ENCODE measurements at regions of chr11 and their contacts with region 1.

Region 1: GRCh38 chr11:88552377-88553062 is 215.0 kb upstream of the CTSC start:
- DNase-seq: peak; percentile 65
- H3K4me3 Mint-ChIP-seq: no peak overlapping the region
- H3K27ac Mint-ChIP-seq: no peak overlapping the region
- H3K4me1 Mint-ChIP-seq: peaks cover under 1% of the 10 kb centered on the region
- H3K27me3 Mint-ChIP-seq: no peaks in the 10 kb centered on the region
- CTCF ChIP-seq: peak; percentile 63

Region 2: DNA sequence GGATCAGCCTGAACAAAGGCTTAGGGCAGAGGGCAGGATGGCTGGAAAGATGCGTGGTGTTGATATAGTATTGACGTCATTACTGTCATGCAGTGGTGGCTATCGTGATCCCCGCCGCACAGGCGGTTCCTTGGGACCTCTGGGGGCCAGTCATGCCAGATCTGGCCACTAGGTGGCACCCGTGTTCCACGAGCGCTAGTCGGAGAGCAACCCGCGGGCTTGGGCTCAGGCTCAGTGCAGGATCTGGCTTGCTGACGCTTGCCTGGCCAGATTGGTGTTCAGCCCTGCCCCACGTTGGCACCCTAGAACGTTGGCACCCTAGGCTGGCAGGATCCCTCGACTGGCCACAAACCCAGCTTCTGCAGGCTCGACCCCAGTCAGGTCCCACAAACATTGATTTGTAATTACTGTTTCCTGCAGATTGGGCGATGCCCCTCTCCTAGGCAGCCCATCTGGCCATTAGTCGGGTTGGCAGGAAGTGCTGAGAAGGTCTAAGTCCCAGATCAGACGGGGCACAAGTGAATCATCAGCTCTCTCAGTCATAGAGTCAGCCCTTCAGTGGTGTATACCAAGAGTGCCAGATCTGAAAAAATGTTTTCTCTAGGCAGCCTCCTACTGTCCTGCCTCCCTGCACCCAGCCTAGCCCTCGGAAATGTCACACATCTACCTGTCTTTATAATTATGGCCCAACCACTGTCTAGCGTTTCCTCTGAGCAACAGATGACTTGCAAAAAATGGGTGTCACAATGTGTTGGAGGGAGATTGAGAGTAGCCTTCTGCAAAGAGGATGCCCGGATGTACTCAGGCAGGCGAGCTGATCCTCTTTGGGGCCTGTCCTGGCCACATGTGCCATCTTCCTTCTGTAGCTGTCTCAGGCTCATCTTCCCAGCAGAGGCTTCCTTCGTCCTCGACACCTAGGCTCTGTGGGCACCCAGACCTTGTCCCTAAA is 1199.5 kb before region 1 on chr11:
- CTCF ChIA-PET with region 1: no interaction called
- intact Hi-C with region 1: loop called (anchors 10 kb)
- DNase-seq: peak; percentile 85
- H3K4me3 Mint-ChIP-seq: no peak overlapping the region
- H3K27ac Mint-ChIP-seq: no peak overlapping the region
- H3K4me1 Mint-ChIP-seq: no peaks in the 10 kb centered on the region
- H3K27me3 Mint-ChIP-seq: no peaks in the 10 kb centered on the region
- CTCF ChIP-seq: peak; percentile 95

Region 3: GRCh38 chr11:87722756-87723565 is 829.6 kb before region 1 on chr11:
- CTCF ChIA-PET with region 1: no interaction called
- intact Hi-C with region 1: loop called (anchors 10 kb)
- DNase-seq: peak; percentile 48
- H3K4me3 Mint-ChIP-seq: no peak overlapping the region
- H3K27ac Mint-ChIP-seq: no peak overlapping the region
- H3K4me1 Mint-ChIP-seq: peaks cover 6% of the 10 kb centered on the region
- H3K27me3 Mint-ChIP-seq: peaks cover 12% of the 10 kb centered on the region
- CTCF ChIP-seq: peak; percentile 51

Region 4: DNA sequence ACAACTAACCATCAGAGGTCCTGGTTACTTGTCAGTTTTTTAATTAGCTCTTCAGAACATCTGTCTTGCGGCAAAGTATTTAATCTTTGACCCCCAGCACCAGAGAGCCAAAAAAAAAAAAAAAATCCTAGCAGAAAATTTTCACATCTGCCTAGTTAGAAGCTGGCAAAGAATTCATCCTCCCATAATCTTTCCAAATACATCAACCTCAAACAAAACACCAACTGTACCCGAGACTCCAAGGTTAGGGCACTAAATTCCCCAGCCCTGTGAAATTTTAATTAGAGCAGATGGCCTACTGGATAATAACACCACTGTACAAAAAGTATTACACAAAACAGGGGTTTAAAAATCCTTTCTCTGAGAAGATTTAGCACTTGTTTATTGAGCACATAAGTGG is 433.0 kb before region 1 on chr11:
- CTCF ChIA-PET with region 1: no interaction called
- intact Hi-C with region 1: no loop called
- DNase-seq: no peak
- H3K4me3 Mint-ChIP-seq: no peak overlapping the region
- H3K27ac Mint-ChIP-seq: no peak overlapping the region
- H3K4me1 Mint-ChIP-seq: peaks cover 7% of the 10 kb centered on the region
- H3K27me3 Mint-ChIP-seq: no peaks in the 10 kb centered on the region
- CTCF ChIP-seq: no peak

Region 5: GRCh38 chr11:88590361-88590760 is 37.8 kb after region 1 on chr11:
- CTCF ChIA-PET with region 1: no interaction called
- intact Hi-C with region 1: no loop called
- DNase-seq: no peak
- H3K4me3 Mint-ChIP-seq: no peak overlapping the region
- H3K27ac Mint-ChIP-seq: no peak overlapping the region
- H3K4me1 Mint-ChIP-seq: no peaks in the 10 kb centered on the region
- H3K27me3 Mint-ChIP-seq: no peaks in the 10 kb centered on the region
- CTCF ChIP-seq: no peak

Region 6: DNA sequence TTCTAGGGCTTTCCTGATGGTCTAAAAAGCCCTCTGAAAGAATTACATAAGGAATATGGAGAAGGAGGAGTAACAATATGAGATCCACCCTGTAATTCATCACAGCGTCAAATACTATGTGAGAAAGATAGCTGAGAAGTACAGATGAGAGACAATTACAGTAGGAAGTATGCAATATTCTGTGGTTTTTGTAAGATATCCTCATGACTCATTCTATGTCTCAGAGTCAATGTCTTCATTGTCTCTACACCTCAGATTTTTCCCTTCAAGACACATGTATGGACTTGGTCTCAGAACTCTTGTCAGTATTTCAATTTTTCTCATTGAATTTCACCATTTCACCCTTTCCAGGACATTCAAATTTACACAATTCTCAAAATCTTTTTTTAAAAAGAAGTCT is 128.3 kb after region 1 on chr11:
- CTCF ChIA-PET with region 1: no interaction called
- intact Hi-C with region 1: loop called (anchors 10 kb)
- DNase-seq: no peak
- H3K4me3 Mint-ChIP-seq: no peak overlapping the region
- H3K27ac Mint-ChIP-seq: peak overlapping the region; percentile 28
- H3K4me1 Mint-ChIP-seq: peaks cover 38% of the 10 kb centered on the region
- H3K27me3 Mint-ChIP-seq: no peaks in the 10 kb centered on the region
- CTCF ChIP-seq: no peak

Region 7: DNA sequence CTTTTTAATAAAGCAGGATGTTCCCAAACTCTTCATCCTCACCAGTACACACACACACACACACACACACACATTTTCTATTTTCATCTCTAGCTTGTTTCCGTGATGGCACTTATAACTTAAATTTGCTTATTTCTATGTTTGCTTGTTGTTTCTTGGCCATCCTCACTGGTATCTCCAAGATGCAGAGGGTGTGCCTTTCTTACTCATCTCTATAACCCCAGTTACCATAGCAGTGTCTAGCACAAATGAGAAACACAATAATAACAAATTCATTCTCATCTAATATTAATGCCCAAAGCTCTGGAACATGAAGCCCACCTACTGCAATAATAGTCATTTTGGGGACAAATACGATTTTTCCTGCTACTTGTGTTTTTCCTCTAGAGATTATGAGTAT is 357.0 kb after region 1 on chr11:
- CTCF ChIA-PET with region 1: no interaction called
- intact Hi-C with region 1: loop called (anchors 10 kb)
- DNase-seq: no peak
- H3K4me3 Mint-ChIP-seq: no peak overlapping the region
- H3K27ac Mint-ChIP-seq: no peak overlapping the region
- H3K4me1 Mint-ChIP-seq: no peaks in the 10 kb centered on the region
- H3K27me3 Mint-ChIP-seq: no peaks in the 10 kb centered on the region
- CTCF ChIP-seq: no peak

Measured in Calu3 (cell line).